ENCODE measurements at regions of chr6 and their contacts with region 1.

Region 1: GRCh38 chr6:3294921-3295871 is 36.4 kb downstream of the PSMG4 start:
- DNase-seq: peak in 1 of 2 donors; percentile 33
- ATAC-seq: peak; percentile 73

Region 2: GRCh38 chr6:3466488-3467219 is 171.5 kb after region 1 on chr6:
- intact Hi-C with region 1: loop called in 1 of 2 experiments (anchors 10 kb)
- DNase-seq: no peak
- ATAC-seq: no peak

Measured in left colon (tissue), 2 donors.